Ascending aorta (tissue), 2 donors: ENCODE measurements at regions of chr4 and their contacts with region 1.

Region 1: DNA sequence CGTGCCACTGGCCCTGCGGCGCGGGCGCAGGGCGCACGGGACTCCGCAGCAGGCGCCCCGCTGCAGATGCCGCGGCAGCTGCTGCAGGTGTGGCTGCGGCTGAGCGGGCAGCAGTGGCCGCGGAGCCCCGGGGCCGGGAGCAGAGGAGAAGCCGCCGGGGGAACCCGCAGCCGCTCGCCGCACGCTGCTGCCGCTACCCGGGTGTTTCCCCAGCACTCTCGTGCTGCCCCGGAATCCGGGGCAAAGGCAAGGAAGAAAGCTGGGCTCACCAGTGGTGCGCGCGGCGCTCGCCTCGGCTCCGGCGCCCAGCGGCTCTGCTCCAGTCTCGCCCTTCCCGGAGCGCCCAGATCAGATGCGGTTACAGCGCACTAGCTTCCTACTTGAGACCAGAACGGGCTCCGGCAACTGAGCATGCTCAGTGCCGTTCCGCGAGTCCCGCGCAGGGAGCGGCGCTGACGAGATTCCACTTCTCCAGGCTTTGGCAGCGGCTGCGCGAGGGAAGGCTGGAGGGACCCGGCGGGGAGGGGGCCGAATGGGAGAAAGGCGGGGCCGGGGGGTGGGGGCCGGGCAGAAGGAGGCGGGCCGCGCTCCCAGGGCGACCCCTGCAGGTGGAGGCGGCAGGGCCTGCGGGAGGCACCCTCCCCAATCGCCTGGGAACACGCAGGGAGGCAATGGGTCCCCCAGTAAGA is at the start of gene APBB2:
- DNase-seq: peak; percentile 69 to 97
- H3K4me3 ChIP-seq: peak within 1 kb of the TSS; percentile 88 to 92
- H3K27ac ChIP-seq: peak within 1 kb of the TSS; percentile 87 to 91
- H3K4me1 ChIP-seq: peaks cover 7 to 16% of the 10 kb centered on the region in 2 donors
- H3K27me3 ChIP-seq: no peaks in the 10 kb centered on the region
- CTCF ChIP-seq: peak; percentile 63 to 92 (median 88)
- total RNA-seq, gene APBB2: 51.4 TPM

Region 2: DNA sequence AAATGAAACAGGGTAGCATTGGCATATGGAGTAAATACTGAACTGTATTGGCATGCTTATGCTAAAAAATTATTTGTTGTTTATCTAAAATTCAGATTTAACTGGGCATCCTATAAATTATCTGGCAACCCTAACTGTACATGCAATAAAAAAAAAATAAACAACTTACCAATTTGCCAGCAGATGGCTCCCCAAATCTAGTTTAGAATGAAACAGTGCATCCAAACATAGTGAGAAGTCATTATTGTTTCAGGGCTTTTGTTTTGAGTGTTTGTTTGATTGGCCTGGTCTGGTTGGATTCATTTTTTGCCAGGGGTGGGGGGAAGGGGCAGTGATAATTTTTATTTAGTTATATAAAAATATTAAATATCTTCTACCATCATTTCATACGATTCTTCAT is 477.4 kb before region 1 on chr4:
- intact Hi-C with region 1: loop called (anchors 10 kb)
- DNase-seq: no peak
- H3K4me3 ChIP-seq: no peak overlapping the region
- H3K27ac ChIP-seq: no peak overlapping the region
- H3K4me1 ChIP-seq: no peaks in the 10 kb centered on the region
- H3K27me3 ChIP-seq: no peaks in the 10 kb centered on the region
- CTCF ChIP-seq: peak in 1 of 3 experiments; percentile 44

Region 3: GRCh38 chr4:40924096-40924792 is 290.0 kb before region 1 on chr4:
- intact Hi-C with region 1: loop called (anchors 1 kb)
- DNase-seq: peak in 1 of 2 donors; percentile 83
- H3K4me3 ChIP-seq: peak overlapping the region in 1 of 2 donors; percentile 43
- H3K27ac ChIP-seq: peak overlapping the region; percentile 87
- H3K4me1 ChIP-seq: peaks cover 7 to 15% of the 10 kb centered on the region in 2 donors
- H3K27me3 ChIP-seq: no peaks in the 10 kb centered on the region
- CTCF ChIP-seq: peak; percentile 60 to 90 (median 80)

Region 4: DNA sequence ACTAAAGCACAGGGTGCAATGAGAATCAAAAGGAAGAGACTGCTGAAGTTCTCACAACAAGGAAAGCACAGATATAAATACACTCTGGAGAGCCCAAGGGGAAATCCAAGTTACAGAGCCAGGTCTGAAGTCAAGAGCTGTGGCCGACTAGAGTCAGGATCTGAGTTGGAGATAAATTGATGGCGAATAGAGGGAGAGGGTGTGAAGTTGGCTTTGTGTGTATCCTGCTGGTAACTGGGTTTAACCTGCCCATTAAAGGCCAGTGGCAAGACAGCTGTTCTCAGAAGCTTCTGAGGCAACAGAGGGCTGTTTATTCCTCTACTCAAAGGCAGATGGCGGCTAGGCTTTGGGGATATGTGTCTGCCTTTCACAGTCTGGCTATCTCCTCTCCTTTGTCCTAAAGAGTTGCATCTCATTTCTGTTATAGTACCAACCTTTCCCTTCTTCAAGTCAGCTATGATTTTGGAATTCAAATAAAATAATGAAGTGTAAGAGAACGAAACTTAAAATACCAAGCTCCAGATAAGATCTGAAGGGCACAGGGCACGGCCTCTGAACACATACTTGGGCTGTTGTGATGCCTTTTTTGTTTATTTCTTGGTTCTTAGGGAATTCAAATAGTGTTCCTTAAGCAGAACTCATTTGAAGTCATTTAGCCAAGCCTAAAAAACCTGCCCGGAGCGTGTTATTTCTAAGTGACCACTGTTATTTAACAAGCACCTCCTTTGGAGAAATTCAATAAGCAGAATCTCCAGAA is 142.1 kb before region 1 on chr4:
- intact Hi-C with region 1: loop called (anchors 5 kb)
- DNase-seq: no peak
- H3K4me3 ChIP-seq: no peak overlapping the region
- H3K27ac ChIP-seq: peak overlapping the region; percentile 3 to 45
- H3K4me1 ChIP-seq: peaks cover 0 to 29% of the 10 kb centered on the region in 2 donors
- H3K27me3 ChIP-seq: no peaks in the 10 kb centered on the region
- CTCF ChIP-seq: no peak

Region 5: DNA sequence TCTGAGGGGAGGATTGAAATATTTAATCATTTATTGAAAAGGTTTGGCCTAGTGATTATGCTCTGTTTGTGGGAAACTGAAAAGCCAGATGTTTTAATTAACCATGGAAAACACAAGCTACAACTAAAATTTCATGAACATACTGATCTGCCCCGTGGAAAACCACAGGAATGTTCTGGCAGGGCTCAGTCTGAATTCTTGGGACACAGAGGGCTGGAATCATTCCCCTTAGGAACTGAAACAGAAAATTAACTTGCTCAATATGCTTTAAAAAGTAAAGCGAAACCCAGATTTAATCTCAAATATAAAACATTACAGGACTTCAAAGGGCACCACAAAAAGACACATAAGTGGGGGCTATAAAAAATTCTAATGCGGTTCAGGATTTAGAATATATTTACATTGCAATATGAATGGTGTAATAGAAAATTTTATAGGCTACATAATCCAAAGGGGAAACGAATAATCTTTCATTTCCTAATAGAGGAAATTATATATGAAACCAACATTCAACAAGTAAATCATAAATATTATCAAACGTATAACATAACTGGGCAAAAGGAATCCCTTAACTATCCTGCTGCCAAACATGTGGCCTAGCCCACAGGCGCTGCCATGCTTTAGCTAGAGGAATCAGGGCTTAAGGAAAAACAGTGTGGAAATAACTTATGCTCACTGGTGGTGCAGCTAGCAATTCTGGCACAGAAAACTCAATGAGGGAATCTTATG is 70.8 kb before region 1 on chr4:
- intact Hi-C with region 1: loop called (anchors 2 kb)
- DNase-seq: peak in 1 of 2 donors; percentile 81
- H3K4me3 ChIP-seq: peak overlapping the region; percentile 24 to 45
- H3K27ac ChIP-seq: peak overlapping the region; percentile 80 to 92
- H3K4me1 ChIP-seq: peaks cover 27 to 60% of the 10 kb centered on the region in 2 donors
- H3K27me3 ChIP-seq: no peaks in the 10 kb centered on the region
- CTCF ChIP-seq: no peak

Region 6: DNA sequence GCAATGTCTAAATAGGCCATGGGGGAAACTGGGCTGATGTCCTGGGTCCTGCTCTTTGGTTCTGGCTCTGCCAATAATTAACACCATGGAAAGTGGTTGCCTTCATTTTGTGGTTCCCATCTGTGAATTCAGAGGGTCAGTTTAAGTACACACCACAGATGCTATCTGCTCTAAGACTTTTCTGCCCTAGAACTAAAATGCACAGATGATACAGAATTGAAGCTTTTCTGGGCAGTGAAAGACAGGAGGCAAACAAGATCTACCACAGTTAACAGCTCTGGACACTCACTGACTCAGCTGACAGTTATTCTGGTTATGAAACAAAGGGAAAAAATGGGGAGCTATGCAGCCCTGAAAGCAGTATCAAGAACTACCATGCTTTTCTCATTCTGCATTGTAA is 37.3 kb before region 1 on chr4:
- intact Hi-C with region 1: loop called (anchors 2 kb)
- DNase-seq: no peak
- H3K4me3 ChIP-seq: no peak overlapping the region
- H3K27ac ChIP-seq: peak overlapping the region in 1 of 2 donors; percentile 63
- H3K4me1 ChIP-seq: peaks cover 10 to 37% of the 10 kb centered on the region in 2 donors
- H3K27me3 ChIP-seq: no peaks in the 10 kb centered on the region
- CTCF ChIP-seq: peak in 1 of 3 experiments; percentile 13